Posterior vena cava (tissue), 2 donors: ENCODE measurements at regions of chr4 and their contacts with region 1.

Region 1: DNA sequence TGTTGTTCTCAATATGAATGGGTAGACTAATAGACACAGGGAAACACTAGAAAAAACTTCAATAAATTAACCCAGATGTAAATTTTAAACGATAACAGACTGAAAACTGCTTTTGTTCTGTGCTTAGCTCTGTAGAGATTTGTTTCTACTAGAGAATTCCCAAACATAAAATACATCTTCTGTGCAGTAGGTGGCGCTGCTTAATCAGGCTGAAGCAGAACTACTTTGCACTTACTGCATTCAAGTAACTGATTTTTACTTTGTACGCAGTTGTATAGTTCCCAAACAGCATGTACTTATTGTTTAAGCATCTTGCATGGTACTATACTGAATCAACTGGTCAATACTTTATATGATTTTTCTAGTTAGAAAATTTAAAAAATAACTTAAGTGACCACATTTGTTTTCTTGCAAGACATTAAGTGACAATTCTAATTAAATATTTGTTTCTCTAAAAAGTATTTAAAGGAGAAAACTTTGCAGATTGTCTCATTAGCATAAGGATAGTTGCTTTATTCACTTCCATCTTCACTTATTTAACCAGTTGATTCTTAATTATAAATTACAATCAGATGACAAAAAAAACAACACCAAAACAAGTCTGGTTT is 490.6 kb downstream of the IL15 start:
- DNase-seq: no peak

Region 2: GRCh38 chr4:140641789-140642439 is 1485.1 kb before region 1 on chr4:
- intact Hi-C with region 1: loop called in 1 of 2 experiments (anchors 10 kb)
- DNase-seq: peak; percentile 81

Region 3: DNA sequence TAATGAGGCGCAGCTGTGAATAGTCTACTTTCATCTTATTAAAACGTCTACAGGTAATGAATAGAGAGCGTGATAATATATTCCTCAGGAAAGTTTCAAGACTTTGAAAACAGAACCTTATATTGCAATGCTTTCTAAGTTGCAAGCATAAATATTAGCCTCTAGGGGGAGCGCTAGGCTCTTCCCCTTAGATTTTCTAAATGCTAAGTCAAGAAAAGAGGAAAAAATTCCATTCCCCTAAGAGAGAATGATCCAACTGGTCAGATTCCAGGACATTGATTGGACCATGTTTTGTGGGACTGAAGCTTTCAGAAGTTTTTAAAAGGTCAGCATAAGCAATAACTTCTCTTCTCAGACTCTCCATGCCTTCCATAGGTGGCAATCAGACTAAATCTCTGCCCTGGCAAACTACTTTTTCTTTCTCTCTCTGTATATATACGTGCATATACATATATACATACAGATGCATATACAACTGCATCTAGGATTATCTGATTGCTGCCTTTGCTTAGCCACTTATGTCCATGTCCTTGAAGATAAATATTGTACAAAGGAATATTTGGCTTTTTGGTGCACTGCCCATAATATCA is 226.2 kb after region 1 on chr4:
- intact Hi-C with region 1: loop called in 1 of 2 experiments (anchors 10 kb)
- DNase-seq: no peak

Region 4: GRCh38 chr4:142846729-142847596 is 720.0 kb after region 1 on chr4:
- intact Hi-C with region 1: loop called in 1 of 2 experiments (anchors 10 kb)
- DNase-seq: no peak